HepG2 (cell line): ENCODE measurements at regions of chr14 and their contacts with region 1.

Region 1: DNA sequence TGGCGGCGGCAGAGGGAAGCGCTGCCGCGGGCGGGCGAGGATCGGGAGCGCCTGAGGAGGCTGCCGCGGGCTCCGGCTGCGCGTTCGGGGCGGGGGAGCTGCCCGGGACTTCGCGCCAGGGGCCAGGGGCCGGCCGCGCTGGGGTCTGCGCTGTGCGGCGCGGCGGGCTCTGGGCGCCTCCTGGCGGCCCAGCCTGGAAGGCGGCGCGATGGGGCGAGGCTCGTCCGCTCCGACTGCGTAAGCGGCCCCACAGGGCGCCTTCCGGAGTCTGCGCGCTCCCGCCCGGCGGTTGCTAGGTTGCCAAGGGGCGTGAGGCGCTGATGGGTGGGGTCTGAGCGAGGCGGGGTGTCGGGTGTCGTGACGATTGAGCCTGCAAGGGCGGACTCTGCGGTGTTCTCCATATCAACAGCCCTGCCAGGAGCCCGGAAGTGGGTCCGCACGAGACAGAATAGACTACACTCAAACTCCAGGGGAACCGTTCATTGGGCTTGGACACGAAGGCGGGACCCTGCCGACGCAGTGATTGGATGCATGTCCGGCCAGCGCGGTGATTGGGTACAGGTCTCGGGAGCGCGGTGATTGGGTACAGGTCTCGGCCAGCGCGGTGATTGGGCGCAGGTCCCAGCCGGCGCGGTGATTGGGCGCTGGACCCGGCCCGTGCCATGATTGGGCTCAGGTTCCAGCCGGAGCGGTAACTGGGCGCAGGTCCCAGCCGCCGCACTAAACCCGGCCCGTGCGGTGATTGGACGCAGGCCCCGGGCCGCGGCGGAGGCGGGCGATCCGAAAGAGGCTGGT is at the start of gene TEDC1:
- DNase-seq: peak; percentile 99
- ATAC-seq: peak; percentile 77
- H3K4me3 ChIP-seq: peak within 1 kb of the TSS; percentile 59 to 80 (median 70); a peak in 5 of 6 replicates
- H3K27ac ChIP-seq: peak within 1 kb of the TSS; percentile 93
- H3K4me1 ChIP-seq: peaks cover 66% of the 10 kb centered on the region
- H3K27me3 ChIP-seq: no peaks in the 10 kb centered on the region; a peak in 1 of 5 replicates
- CTCF ChIP-seq: peak; percentile 80
- EP300 ChIP-seq: peak in 1 of 2 experiments; percentile 40; a peak in 1 of 4 replicates
- POLR2A ChIP-seq: peak in 1 of 2 experiments; percentile 75; a peak in 1 of 4 replicates
- RAD21 ChIP-seq: peak; percentile 98
- total RNA-seq, gene TEDC1: 20.7 and 27.4 TPM in 2 replicates

Region 2: DNA sequence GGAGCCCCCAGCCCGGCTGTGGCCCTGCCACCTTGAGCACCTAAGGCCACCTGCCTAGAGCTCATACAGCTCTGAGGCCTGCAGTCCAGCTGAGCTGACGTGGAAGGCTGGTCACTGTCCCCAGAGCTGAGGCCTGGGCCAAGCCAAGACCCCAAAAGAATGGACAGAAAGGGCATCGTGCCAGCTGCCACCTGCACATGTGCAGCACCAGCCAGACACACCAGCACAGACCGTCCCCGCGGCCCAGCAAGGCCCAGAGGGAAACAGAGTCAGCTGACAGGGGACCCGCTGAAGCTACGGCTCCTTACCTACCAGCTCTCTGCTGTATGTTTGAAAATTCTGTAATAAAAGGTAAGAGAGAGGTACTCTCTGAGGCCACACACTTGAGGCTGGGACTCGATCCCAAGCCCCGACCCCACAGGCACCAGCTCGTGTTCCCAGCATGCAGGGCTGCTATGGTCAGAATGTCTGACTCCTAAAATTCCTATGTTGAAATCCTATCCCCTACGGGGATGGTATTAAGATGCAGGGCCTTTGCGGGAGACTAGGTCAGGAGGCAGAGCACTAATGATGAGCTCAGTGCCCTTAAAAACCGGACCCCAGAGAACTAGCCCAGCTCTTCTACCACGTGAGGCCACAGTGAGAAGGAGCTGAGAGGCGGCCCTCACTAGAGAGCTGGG is 215.4 kb before region 1 on chr14:
- CTCF ChIA-PET with region 1: no interaction called
- POLR2A ChIA-PET with region 1: no interaction called
- in situ Hi-C with region 1: no loop called
- intact Hi-C with region 1: no loop called
- DNase-seq: no peak
- ATAC-seq: no peak
- H3K4me3 ChIP-seq: no peak overlapping the region
- H3K27ac ChIP-seq: no peak overlapping the region
- H3K4me1 ChIP-seq: no peaks in the 10 kb centered on the region
- H3K27me3 ChIP-seq: no peaks in the 10 kb centered on the region
- CTCF ChIP-seq: no peak
- EP300 ChIP-seq: no peak
- POLR2A ChIP-seq: no peak
- RAD21 ChIP-seq: no peak

Region 3: GRCh38 chr14:105314287-105315200 is 176.2 kb before region 1 on chr14 and contains the start of gene PACS2:
- CTCF ChIA-PET with region 1: no interaction called
- POLR2A ChIA-PET with region 1: interaction called, 3 read pairs
- in situ Hi-C with region 1: no loop called
- intact Hi-C with region 1: loop called (anchors 10 kb)
- DNase-seq: peak; percentile 46
- ATAC-seq: peak; percentile 50
- H3K4me3 ChIP-seq: peak within 1 kb of the TSS; percentile 55 to 94 (median 87)
- H3K27ac ChIP-seq: peak within 1 kb of the TSS; percentile 23
- H3K4me1 ChIP-seq: peaks cover 24% of the 10 kb centered on the region
- H3K27me3 ChIP-seq: no peaks in the 10 kb centered on the region
- CTCF ChIP-seq: no peak
- EP300 ChIP-seq: no peak
- POLR2A ChIP-seq: peak in 1 of 2 experiments; percentile 59; a peak in 2 of 4 replicates
- RAD21 ChIP-seq: no peak
- total RNA-seq, gene PACS2: 14.6 and 23.6 TPM in 2 replicates

Region 4: DNA sequence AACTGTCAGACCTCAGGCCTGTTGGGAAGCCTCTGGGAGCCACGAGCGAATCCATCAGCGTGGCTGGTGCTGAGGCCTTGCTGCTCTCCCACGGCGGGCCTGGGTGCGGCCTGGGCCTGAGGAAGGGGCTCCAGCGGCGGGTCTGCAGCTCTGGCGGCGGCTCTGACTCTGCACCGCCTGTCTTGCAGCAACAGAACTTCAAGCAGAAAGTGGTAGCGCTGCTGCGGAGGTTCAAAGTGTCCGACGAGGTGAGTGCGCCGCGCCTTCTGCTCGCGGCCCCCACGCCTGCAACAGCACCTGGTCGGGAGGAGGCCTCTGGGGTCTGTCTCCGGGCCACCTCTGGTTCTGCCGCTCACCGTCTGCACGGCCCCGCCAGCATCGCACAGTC is 121.1 kb before region 1 on chr14:
- CTCF ChIA-PET with region 1: interaction called, 24 read pairs
- POLR2A ChIA-PET with region 1: interaction called, 3 read pairs
- in situ Hi-C with region 1: no loop called
- intact Hi-C with region 1: loop called (anchors 2 kb)
- DNase-seq: no peak
- ATAC-seq: no peak
- H3K4me3 ChIP-seq: no peak overlapping the region
- H3K27ac ChIP-seq: no peak overlapping the region
- H3K4me1 ChIP-seq: no peaks in the 10 kb centered on the region
- H3K27me3 ChIP-seq: no peaks in the 10 kb centered on the region
- CTCF ChIP-seq: no peak
- EP300 ChIP-seq: no peak
- POLR2A ChIP-seq: no peak
- RAD21 ChIP-seq: no peak

Region 5: GRCh38 chr14:105375635-105376057 is 115.1 kb before region 1 on chr14:
- CTCF ChIA-PET with region 1: interaction called, 24 read pairs
- POLR2A ChIA-PET with region 1: interaction called, 3 read pairs
- in situ Hi-C with region 1: loop called (anchors 5 kb)
- intact Hi-C with region 1: loop called (anchors 2 kb)
- DNase-seq: no peak
- ATAC-seq: no peak
- H3K4me3 ChIP-seq: no peak overlapping the region
- H3K27ac ChIP-seq: no peak overlapping the region
- H3K4me1 ChIP-seq: no peaks in the 10 kb centered on the region
- H3K27me3 ChIP-seq: no peaks in the 10 kb centered on the region
- CTCF ChIP-seq: no peak
- EP300 ChIP-seq: no peak
- POLR2A ChIP-seq: no peak
- RAD21 ChIP-seq: no peak

Region 6: DNA sequence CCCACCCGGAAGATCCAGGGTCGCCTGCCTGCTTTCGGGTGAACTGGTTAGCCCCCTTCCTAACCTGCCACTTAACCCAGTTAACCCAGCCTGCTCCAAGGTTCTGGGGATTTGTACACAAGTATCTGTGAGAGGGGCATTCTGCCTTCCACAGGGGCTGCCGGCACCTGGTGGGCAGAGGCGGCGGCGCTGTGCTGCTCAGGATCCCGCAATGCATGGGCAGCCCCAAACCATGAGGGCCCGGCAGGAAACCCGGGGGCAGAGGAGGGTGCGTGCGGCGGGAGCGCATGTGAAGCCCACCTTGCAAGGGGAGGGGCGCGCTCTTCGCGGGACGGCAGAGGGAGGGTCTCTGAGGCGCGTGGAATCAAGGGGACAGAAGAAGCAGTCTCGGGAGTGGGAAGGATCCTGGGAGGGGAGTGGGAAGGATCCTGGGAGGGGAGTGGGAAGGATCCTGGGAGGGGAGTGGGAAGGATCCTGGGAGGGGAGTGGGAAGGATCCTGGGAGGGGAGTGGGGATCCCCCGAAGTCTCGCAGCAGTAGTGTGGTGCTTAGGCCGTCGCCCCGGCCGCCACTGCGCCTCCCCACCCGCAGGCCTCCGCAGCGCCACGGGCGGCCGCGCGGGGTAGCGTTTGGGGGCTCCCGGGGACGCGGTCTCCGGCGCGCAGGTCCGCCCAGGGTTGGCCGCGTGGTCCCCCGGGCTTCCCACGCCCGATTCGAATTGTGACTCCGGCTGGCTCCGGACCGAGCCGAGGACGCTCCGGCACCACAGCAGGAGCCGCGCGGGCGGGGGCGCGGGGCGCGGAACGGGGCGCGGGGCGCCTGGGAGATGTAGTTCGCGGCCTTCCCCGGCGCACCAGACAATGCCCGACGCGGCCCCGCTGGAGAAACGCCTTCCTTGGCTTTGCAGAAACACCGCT is 76.1 kb before region 1 on chr14:
- CTCF ChIA-PET with region 1: no interaction called
- POLR2A ChIA-PET with region 1: no interaction called
- in situ Hi-C with region 1: no loop called
- intact Hi-C with region 1: loop called (anchors 5 kb)
- DNase-seq: peak; percentile 22
- ATAC-seq: peak; percentile 75
- H3K4me3 ChIP-seq: peak overlapping the region; percentile 49 to 67 (median 57)
- H3K27ac ChIP-seq: no peak overlapping the region
- H3K4me1 ChIP-seq: peaks cover 51% of the 10 kb centered on the region
- H3K27me3 ChIP-seq: peaks cover 2 to 41% of the 10 kb centered on the region in 2 experiments; a peak in 4 of 5 replicates
- CTCF ChIP-seq: peak; percentile 54; the same call in 1 of the 2 replicates
- EP300 ChIP-seq: no peak
- POLR2A ChIP-seq: no peak
- RAD21 ChIP-seq: peak; percentile 49

Region 7: GRCh38 chr14:105473677-105474482 is 16.9 kb before region 1 on chr14:
- CTCF ChIA-PET with region 1: no interaction called
- POLR2A ChIA-PET with region 1: interaction called, 4 read pairs
- in situ Hi-C with region 1: no loop called
- intact Hi-C with region 1: loop called (anchors 2 kb)
- DNase-seq: peak; percentile 77
- ATAC-seq: peak; percentile 2
- H3K4me3 ChIP-seq: peak overlapping the region; percentile 46 to 83 (median 54); a peak in 4 of 6 replicates
- H3K27ac ChIP-seq: no peak overlapping the region
- H3K4me1 ChIP-seq: peaks cover 33% of the 10 kb centered on the region
- H3K27me3 ChIP-seq: peaks cover 0 to 4% of the 10 kb centered on the region in 2 experiments; a peak in 2 of 5 replicates
- CTCF ChIP-seq: no peak
- EP300 ChIP-seq: no peak; a peak in 1 of 4 replicates
- POLR2A ChIP-seq: no peak
- RAD21 ChIP-seq: no peak

Region 8: GRCh38 chr14:105527661-105528581 is 37.2 kb after region 1 on chr14:
- CTCF ChIA-PET with region 1: interaction called, 10 read pairs
- POLR2A ChIA-PET with region 1: interaction called, 10 read pairs
- in situ Hi-C with region 1: loop called (anchors 5 kb)
- intact Hi-C with region 1: no loop called
- DNase-seq: peak; percentile 38
- ATAC-seq: peak; percentile 50
- H3K4me3 ChIP-seq: peak overlapping the region; percentile 79 to 89 (median 80)
- H3K27ac ChIP-seq: peak overlapping the region; percentile 51
- H3K4me1 ChIP-seq: peaks cover 40% of the 10 kb centered on the region
- H3K27me3 ChIP-seq: peaks cover 0 to 17% of the 10 kb centered on the region in 2 experiments; a peak in 3 of 5 replicates
- CTCF ChIP-seq: peak; percentile 93
- EP300 ChIP-seq: no peak
- POLR2A ChIP-seq: no peak; a peak in 1 of 4 replicates
- RAD21 ChIP-seq: peak; percentile 98

Region 9: DNA sequence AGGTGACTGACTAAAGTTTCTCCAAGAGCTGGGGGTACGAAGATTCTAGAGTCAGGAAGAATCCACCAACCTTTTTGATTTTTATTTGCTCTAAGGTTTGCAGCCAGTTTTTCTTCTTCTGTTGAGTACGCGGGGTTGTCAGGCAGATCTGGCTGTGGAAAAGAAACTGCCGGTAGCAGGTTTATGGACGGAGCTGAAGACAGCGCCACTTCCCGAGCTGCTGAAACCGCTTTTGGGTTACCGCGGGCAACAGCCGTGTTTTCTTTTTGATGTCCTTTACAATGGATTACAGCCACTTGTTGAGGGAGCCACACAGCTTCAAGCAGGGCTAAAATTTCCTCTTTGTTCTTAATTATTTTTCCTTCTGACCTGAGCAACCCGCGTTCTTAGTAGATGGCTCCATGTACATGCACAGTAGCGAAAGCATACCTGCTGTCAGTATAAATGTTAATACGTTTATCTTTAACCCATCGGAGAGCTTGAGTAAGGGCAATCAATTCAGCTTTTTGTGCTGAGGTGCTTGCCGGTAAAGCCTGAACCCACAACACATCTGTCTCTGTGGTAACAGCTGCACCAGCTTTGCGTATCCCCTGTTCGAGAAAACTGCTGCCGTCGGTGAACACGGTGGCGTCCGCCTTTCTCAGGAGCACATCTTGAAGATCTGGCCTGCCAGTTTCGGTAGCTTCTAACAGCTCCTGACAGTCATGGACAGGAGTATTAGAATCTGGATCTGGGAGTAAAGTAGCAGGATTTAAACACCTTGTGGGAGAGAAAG is 710.0 kb after region 1 on chr14:
- CTCF ChIA-PET with region 1: no interaction called
- POLR2A ChIA-PET with region 1: no interaction called
- in situ Hi-C with region 1: no loop called
- intact Hi-C with region 1: no loop called
- DNase-seq: no peak
- ATAC-seq: no peak
- H3K4me3 ChIP-seq: no peak overlapping the region
- H3K27ac ChIP-seq: no peak overlapping the region
- H3K4me1 ChIP-seq: no peaks in the 10 kb centered on the region
- H3K27me3 ChIP-seq: peaks cover 0 to 7% of the 10 kb centered on the region in 2 experiments; a peak in 2 of 5 replicates
- CTCF ChIP-seq: no peak
- EP300 ChIP-seq: no peak
- POLR2A ChIP-seq: no peak
- RAD21 ChIP-seq: no peak